PC-9 (cell line): ENCODE measurements at regions of chr5 and their contacts with region 1.

Region 1: DNA sequence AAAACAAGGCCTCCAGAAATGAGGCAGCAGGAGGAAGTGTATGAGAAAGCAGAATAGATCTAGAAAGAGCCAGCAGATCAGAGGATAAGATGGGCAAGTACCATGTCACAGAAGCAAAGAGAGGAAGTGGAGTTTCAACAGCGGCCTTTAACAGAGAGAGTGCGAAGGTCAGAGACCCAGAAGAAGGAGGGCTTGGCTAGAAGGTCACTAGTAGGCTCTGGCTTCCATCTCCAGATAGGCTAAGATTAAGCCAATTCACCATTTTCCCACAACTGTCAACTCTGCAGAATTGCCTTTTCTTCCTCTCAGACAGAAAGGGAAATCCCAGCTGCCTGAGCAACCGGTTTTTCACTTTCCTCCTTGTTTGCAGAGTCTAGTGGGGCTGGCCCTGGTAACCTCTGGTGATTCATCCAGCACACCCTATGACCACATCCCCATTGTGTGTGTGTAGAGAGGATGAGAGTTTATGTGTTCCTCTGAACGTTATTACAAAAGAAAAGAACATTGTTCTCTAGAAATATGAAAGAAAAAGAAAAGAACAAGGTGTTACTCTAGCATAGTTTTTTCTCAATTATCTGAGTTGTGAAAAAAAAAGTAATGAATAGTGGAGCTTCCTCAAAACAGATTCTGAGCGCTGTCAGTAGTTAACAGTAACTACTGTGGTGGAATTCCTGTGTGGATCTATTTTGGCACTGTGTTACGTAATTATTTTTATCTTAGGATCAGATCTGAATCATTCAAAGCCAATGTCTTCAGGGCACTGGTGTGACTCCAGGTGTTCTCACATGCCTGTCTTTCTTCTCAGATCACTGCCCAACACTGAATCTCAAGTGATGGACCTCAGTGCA is 220.4 kb downstream of the ARRDC3 start:
- DNase-seq: peak; percentile 83 to 97
- H3K4me3 ChIP-seq: peak overlapping the region; percentile 32; the same call in 1 of the 2 replicates
- H3K27ac ChIP-seq: peak overlapping the region; percentile 78
- H3K4me1 ChIP-seq: peaks cover 60% of the 10 kb centered on the region
- H3K27me3 ChIP-seq: no peaks in the 10 kb centered on the region
- CTCF ChIP-seq: no peak

Region 2: DNA sequence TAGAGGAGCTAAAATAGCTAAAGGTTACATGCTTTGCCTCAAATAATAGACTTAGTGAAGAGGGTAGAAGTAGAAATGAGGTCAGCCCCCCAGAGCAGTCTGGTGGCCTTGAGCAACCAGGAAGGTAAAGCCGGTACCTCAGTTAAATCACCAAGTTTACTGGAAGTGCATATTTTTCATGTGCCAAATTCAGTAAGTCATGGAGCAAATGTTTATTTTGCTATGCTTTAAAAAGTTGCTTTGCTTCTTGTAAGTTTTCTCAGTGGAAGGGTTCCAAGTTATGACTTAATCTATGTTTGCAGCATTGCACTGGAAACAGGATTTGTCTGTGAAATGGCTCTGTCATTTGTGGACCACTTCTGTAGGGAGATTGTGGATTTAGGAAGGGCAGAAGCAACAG is 36.3 kb before region 1 on chr5:
- CTCF ChIA-PET with region 1: no interaction called
- POLR2A ChIA-PET with region 1: no interaction called
- intact Hi-C with region 1: loop called (anchors 1 kb)
- DNase-seq: no peak
- H3K4me3 ChIP-seq: no peak overlapping the region
- H3K27ac ChIP-seq: peak overlapping the region; percentile 52
- H3K4me1 ChIP-seq: peaks cover 16% of the 10 kb centered on the region
- H3K27me3 ChIP-seq: no peaks in the 10 kb centered on the region
- CTCF ChIP-seq: no peak

Region 3: DNA sequence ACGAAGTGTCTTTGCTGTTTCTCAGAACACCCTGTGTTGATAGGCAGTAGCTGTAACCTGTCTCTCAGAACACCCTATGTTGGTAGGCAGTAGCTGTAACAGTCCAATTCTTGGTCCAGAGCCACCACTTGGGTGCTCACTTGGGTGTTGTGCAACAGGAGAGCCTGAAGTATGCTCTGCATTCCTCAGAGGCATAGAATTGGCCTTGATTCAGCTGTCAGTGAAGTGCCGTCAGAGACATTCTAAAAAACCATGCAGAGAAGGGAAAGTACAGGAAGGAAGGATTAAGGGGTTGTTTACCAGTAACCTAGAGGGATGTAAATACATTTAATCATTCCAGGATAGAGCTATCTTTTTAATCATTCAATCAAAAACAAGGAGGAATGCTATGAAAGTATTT is 10.8 kb before region 1 on chr5:
- CTCF ChIA-PET with region 1: no interaction called
- POLR2A ChIA-PET with region 1: no interaction called
- intact Hi-C with region 1: loop called (anchors 1 kb)
- DNase-seq: peak; percentile 62 to 84
- H3K4me3 ChIP-seq: no peak overlapping the region
- H3K27ac ChIP-seq: no peak overlapping the region
- H3K4me1 ChIP-seq: peaks cover 25% of the 10 kb centered on the region
- H3K27me3 ChIP-seq: no peaks in the 10 kb centered on the region
- CTCF ChIP-seq: no peak

Region 4: GRCh38 chr5:91219803-91220371 is 57.1 kb after region 1 on chr5:
- CTCF ChIA-PET with region 1: no interaction called
- POLR2A ChIA-PET with region 1: no interaction called
- intact Hi-C with region 1: loop called (anchors 2 kb)
- DNase-seq: no peak
- H3K4me3 ChIP-seq: no peak overlapping the region
- H3K27ac ChIP-seq: peak overlapping the region; percentile 62
- H3K4me1 ChIP-seq: peaks cover 23% of the 10 kb centered on the region
- H3K27me3 ChIP-seq: no peaks in the 10 kb centered on the region
- CTCF ChIP-seq: peak; percentile 52

Region 5: GRCh38 chr5:91296691-91297143 is 134.0 kb after region 1 on chr5:
- CTCF ChIA-PET with region 1: no interaction called
- POLR2A ChIA-PET with region 1: no interaction called
- intact Hi-C with region 1: loop called (anchors 5 kb)
- DNase-seq: peak; percentile 84 to 94
- H3K4me3 ChIP-seq: peak overlapping the region; percentile 41; the same call in 1 of the 2 replicates
- H3K27ac ChIP-seq: peak overlapping the region; percentile 94
- H3K4me1 ChIP-seq: peaks cover 64% of the 10 kb centered on the region
- H3K27me3 ChIP-seq: no peaks in the 10 kb centered on the region
- CTCF ChIP-seq: no peak